Head of caudate nucleus (tissue), 42 donors: ENCODE measurements at regions of chr11 and their contacts with region 1.

Region 1: GRCh38 chr11:57530596-57531507 is at the start of gene TIMM10:
- DNase-seq: peak; percentile 91 to 99 (median 97)

Region 2: DNA sequence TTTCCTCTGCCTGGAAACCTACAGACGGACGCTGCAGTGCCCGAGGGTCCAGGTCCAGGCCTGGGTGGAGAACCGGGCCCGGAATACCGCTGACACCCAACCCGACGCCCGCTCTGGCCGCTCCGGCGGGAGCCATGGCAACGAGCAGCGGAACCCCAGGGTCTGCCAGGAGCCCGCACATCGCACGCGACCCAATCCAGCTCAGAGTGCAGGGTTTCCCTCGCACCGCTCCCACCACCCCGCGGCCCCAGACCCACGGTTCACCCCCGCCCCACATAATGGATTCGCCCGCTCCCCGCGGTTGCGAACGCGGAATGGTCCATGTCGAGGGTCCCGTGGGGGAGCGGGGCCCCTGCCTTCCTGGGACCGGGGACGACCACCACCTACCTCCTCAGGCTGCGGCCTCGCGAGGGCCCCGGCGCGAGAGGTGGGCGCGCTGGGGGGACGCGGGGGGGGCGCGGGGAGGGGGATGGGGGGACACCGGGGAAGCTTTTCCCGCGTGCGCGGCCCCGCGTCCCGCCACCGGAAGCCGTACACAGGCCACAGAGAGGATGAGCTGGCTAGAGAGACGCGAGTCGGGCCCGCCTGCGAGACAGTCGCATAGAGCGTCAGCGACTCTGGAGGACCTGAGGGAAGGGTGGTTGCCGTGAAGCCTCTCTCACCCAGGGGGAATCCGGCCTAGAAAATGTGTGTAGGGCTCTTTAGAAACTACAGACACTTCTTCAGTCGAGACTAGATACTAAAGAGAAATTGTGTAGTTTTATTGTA is 195.3 kb before region 1 on chr11 and contains the start of gene SSRP1:
- intact Hi-C with region 1: loop called (anchors 5 kb)
- DNase-seq: peak; percentile 85 to 97 (median 93)

Region 3: DNA sequence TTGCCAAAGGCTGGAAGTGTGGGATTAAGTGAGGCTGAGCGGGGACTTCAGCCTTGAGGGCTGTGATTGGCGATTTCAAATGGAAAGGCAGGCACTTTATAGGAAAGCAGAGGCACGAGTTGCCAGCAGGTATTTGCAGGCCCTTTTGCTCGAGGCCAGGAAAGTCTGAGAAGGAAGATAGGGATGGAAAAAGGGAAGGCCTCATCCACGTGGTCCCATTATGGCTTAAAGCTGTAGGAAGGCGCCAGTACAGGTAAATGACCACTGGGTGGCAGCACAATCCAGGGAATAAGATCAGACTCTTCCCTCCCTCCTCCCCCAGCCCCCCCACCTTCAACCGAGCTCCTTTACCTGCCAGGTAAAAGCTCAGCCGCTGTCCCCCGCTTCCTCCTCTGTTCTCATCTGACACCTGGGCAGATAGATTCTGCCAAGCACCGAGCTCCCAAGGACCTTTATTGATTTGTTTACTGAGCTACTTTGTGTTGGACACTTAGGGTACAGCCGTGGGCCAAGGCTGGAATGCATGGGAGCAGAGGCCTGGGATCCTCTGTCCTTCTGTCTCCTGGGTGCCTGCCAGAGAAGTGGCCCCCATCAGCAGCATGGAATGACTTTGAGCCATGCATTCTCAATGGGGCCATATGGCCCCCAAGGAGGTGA is 185.2 kb before region 1 on chr11:
- intact Hi-C with region 1: loop called (anchors 5 kb)
- DNase-seq: peak; percentile 58 to 92 (median 80)

Region 4: DNA sequence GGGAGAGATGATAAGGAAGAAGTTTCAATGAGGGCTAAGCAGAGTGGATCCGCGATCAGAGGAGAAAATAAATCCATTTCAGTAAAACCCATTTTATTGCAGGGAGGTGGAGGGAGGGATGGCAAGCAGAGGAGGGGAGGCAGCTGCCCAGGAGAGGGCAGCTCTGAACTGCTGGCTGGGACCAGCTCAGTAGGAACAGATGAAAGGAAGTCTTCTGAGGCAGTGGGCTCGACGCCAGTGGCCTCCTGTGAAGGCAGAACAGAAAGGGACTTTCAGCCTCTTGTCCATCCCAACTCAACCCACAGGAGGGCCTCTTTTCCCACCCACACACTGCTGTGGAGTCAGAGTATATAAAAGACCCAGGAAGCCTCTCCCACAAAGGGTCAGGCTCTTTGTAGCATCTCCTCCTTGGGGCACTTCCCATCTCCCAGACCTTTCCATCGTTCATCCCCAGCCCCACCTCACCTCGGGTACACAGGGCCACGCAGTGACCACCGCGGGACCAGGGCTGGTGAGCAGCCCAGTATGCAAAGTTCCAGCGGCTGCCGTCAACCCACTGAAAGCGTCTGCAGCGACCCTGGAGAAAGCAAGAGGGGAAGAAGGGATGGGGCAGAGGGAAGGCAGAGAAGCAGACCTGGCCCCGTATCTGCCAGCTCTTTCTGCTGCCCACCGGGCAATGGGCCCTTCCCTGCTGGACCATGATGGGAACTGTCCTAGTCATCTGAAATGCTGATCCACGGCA is 143.4 kb before region 1 on chr11:
- intact Hi-C with region 1: no loop called
- DNase-seq: peak in 39 of 42 donors; percentile 6 to 62 (median 35)

Region 5: DNA sequence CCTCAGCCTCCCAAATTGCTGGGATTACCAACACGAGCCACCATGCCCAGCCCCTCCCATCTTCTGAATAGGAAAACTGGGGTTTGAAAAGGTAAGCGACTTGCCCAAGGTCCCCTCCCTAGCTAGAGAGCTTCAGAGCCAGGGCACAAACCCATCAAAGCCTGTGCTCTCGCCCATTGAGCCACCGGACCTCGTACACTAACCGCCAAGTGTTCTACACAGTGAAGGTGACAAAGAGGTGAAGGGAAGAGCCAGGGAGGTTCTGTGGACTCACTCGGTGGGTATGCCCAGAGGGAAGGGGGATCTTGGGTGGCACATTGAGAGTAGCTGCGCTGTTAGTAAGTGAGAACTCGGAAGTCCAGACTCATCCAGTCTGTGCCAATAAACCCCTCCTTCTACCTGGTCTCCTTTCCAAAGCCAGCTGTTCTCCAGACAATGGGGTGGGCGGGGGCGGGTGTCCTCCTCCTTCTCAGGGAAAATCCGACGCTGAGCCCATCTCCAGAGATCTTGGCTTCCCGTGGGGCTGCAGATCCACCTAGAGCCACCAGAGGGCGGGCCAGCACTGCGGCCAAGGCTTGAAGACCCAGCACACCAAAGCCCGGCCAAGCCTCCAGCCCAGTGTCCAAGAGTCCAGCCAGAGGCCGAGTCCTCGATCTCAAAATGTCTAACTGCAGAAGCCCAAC is 73.8 kb before region 1 on chr11:
- intact Hi-C with region 1: loop called (anchors 5 kb)
- DNase-seq: peak; percentile 67 to 95 (median 88)

Region 6: DNA sequence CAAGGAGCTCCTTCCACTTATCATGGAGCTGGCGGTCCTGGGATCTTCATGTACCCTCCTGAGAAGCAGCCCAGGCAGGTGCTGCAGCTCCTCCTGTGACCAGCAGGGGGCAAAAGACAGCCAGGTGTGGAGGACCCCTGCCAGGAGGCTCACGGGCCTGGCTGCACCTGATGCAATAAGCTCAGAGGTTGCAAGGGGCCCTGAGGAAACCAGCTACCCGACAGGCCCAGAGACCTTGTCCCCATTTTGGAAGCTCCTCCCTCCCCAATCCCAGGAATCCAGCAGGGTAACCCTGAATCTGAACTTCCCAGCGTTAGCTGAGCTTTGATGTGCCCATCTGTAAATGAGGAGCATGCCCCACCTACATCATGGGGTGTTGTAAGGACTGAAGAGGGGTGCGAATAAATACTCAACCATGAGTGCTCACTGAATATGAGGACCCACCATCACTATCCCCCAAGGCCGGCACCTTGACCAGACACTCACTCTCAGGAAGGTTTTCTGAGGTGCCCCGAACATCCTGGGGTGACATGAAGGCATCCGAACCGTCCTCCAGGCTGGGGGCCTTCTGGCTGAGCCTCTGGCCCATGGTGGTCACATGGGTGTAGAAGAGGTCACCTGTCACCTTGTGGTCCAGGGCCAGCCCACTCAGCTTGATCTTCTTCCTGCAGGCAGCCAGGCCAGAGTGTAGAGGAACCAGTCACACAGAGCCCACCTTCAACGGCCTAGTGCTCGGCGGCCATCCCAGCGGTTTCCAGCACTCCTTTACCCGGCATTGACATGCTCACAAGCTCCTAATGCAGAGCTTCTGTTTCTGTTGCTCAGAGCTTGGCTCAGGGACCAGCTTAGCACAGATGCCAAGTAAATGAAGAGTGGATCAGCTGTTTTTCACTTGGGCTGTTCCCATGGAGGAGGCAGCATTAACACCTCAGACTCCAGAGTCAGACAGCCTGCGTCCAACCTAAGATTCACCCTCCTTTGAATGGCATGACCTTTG is 37.0 kb before region 1 on chr11:
- intact Hi-C with region 1: loop called (anchors 5 kb)
- DNase-seq: peak in 33 of 42 donors; percentile 15 to 80 (median 55)

Region 7: DNA sequence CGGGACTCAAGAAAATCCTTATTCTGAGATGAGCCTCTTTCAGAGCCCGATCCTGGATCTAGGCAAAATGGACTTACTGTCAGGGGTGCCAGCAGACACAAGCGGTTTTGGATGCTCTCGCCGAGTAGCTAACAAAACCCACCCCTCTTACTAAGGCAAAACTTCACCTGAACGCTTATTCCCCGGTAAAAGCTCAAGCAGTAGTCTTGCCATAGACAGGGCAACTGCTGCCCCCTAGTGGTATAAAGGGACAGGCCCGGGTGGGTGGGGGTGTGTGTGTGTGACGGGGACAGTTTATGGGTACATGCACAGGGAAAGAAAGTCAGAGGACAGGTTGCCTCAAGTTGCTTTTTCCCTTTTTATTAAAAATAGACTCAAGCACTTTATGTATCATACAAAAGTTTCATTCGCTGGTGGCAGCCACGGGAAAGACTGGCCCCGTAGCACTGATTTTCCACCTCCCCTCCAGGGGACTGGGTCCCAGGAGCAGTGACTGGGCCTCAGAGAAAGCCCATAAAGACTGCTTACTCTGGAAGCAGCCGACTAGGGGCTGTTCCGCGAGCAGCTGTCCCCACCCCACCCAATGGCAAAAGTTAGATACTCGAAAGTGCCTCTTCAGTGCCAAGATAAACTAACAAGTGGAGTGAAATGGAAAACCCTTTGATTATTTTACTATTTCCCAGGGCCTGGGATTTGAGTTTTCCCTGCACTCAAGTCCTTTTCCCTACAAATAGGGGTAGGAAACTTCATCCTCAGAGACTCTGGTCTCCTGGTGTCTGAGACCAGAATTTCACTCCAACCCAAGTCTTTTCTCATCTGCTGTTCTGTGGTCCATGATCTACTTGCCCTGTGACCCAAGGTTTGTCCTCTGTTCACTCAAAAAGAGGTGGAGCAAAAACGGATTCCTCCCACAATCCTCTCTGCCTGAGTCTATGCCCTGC is 114.2 kb after region 1 on chr11:
- intact Hi-C with region 1: loop called (anchors 10 kb)
- DNase-seq: peak; percentile 73 to 95 (median 87)